ENCODE measurements at regions of chr6 and their contacts with region 1.

Region 1: GRCh38 chr6:149028767-149029405 is 282.1 kb downstream of the UST start:
- DNase-seq: no peak
- H3K4me3 ChIP-seq: no peak overlapping the region
- H3K27me3 ChIP-seq: peaks cover 1% of the 10 kb centered on the region; the same call in 1 of the 2 replicates
- CTCF ChIP-seq: peak; percentile 49

Region 2: GRCh38 chr6:148570451-148570850 is 458.4 kb before region 1 on chr6:
- CTCF ChIA-PET with region 1: interaction called, 3 read pairs
- POLR2A ChIA-PET with region 1: interaction called, 13 read pairs
- DNase-seq: no peak
- H3K4me3 ChIP-seq: no peak overlapping the region
- H3K27me3 ChIP-seq: no peaks in the 10 kb centered on the region
- CTCF ChIP-seq: no peak

Region 3: GRCh38 chr6:148907573-148907972 is 121.3 kb before region 1 on chr6:
- CTCF ChIA-PET with region 1: no interaction called
- POLR2A ChIA-PET with region 1: no interaction called
- DNase-seq: no peak
- H3K4me3 ChIP-seq: no peak overlapping the region
- H3K27me3 ChIP-seq: no peaks in the 10 kb centered on the region
- CTCF ChIP-seq: no peak

Region 4: GRCh38 chr6:149014631-149015534 is 14.0 kb before region 1 on chr6:
- CTCF ChIA-PET with region 1: interaction called, 22 read pairs
- POLR2A ChIA-PET with region 1: no interaction called
- DNase-seq: no peak
- H3K4me3 ChIP-seq: no peak overlapping the region
- H3K27me3 ChIP-seq: no peaks in the 10 kb centered on the region
- CTCF ChIP-seq: no peak

Region 5: DNA sequence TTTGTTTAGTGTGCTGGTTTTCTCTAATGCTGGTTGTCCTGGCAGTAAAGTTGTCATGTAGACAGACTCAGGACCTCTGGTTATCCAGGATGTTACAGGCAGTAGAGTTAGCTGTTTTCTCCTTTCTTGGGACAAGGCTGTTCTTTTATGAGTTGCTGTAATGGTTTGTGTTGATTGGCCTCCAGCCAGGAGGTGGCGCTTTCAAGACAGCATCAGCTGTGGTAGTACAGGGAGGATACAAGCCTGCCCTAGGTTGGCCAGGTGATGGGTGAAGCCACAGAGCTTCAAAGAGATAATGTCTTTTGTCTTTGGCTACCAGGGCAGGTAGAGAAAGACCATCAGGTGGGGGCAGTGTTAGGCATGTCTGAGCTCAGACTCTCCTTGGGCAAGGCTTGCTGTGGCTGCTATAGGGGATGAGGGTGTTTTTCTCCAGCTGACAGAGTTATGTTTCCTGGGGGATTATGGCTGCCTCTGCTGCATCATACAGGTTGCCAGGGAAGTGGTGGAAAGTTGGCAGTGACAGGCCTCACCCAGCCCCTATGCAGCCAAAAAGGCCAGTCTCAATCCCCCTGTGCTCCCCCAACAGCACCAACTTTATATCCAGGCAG is 161.4 kb after region 1 on chr6:
- CTCF ChIA-PET with region 1: no interaction called
- POLR2A ChIA-PET with region 1: no interaction called
- DNase-seq: no peak
- H3K4me3 ChIP-seq: no peak overlapping the region
- H3K27me3 ChIP-seq: no peaks in the 10 kb centered on the region; the same call in none of the 2 replicates
- CTCF ChIP-seq: no peak

Region 6: DNA sequence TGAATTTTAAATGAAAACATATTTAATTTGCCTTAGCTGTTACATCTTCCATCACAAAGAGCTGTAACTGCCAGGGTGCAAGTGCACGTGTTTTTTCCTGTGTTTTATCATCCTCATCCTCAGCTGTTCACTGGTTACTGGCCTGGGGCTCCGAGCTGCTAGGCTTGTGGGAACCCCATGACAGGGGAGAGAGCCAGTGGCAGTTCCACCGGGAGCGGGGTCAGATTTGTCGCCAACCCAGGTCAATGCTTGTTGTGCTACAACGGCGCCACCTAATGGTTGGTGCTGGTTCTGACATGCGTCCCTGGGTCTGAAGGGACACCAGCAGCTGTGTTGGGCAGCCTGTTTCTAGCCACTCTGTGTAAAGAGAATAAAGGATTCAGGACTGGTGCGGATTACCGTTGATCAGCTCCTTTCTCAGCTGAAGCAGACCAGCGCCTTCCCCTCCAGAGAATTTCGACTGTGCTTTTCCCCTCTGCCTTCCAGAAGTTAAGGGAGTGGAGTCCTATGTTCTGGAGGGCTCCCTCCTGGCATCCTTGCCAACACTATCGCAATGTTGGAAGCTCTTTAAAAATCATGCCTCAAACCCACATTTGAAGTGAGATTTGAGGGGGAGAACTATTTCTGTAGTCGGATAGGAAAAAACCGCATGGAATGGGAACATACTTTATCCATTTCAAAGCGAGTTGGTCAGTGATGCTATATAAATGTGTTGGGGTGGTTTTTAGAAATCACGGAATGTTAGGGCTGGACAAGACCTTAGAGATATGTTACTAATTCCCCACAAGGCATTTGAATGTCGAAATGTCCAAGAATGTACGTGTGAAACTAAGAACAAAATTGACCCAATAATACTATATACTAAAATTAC is 403.3 kb after region 1 on chr6:
- CTCF ChIA-PET with region 1: interaction called, 67 read pairs
- POLR2A ChIA-PET with region 1: interaction called, 4 read pairs
- DNase-seq: no peak
- H3K4me3 ChIP-seq: no peak overlapping the region
- H3K27me3 ChIP-seq: peaks cover 8% of the 10 kb centered on the region
- CTCF ChIP-seq: peak; percentile 87